ENCODE measurements at regions of chr5 and their contacts with region 1.

Region 1: GRCh38 chr5:146466521-146467349 is 19.6 kb downstream of the TCERG1 start:
- DNase-seq: no peak
- H3K4me3 Mint-ChIP-seq: no peak overlapping the region
- H3K27ac Mint-ChIP-seq: no peak overlapping the region
- H3K4me1 Mint-ChIP-seq: peaks cover 18% of the 10 kb centered on the region
- H3K27me3 Mint-ChIP-seq: no peaks in the 10 kb centered on the region

Region 2: GRCh38 chr5:145915970-145916638 is 550.6 kb before region 1 on chr5:
- CTCF ChIA-PET with region 1: interaction called, 11 read pairs
- intact Hi-C with region 1: no loop called
- DNase-seq: no peak
- H3K4me3 Mint-ChIP-seq: no peak overlapping the region
- H3K27ac Mint-ChIP-seq: no peak overlapping the region
- H3K4me1 Mint-ChIP-seq: no peaks in the 10 kb centered on the region
- H3K27me3 Mint-ChIP-seq: peaks cover 3% of the 10 kb centered on the region

Region 3: DNA sequence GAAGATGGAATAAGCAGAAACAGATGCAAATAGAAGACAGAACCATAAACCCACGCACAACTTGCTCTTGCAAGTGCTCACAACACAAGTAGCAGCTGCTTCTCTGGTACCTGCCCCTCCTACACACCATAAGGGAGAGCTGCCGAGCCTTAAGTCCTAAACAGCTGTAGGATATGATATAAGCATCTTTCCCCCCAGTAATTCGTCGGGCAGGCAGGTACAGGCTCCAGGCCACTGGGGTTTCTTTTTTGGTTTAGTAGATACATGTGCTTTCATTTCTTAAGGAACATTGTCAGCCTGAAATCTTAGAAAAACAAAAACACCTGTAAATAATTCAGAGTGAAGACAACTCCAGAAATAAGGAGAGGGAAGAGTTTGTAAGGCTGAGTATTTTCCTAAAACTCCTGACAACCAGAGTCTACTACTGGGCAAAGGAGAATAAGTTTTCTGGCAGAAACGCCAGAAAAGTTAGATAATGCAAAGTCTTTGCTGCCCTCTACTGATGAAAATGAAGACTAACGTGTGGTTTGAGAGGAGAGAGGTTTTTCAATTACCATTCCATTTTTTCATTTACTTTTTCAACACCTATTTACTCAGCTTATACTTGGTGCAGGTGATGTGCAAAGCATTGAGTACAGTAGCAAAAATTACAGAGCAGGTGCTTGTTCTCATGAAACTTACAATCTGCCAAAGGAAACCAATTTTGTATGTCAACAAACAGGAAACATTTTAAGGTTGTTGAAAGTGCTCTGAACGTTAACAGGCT is 39.7 kb before region 1 on chr5:
- CTCF ChIA-PET with region 1: no interaction called
- intact Hi-C with region 1: no loop called
- DNase-seq: peak; percentile 5
- H3K4me3 Mint-ChIP-seq: no peak overlapping the region
- H3K27ac Mint-ChIP-seq: no peak overlapping the region
- H3K4me1 Mint-ChIP-seq: peaks cover 4% of the 10 kb centered on the region
- H3K27me3 Mint-ChIP-seq: peaks cover 9% of the 10 kb centered on the region